Breast epithelium (tissue), 4 donors: ENCODE measurements at regions of chr15 and their contacts with region 1.

Region 1: GRCh38 chr15:31365655-31366127 is 39.1 kb downstream of the KLF13 start:
- DNase-seq: peak; percentile 87 to 92
- H3K4me3 ChIP-seq: peak overlapping the region; percentile 37 to 50 (median 45)
- H3K27ac ChIP-seq: peak overlapping the region; percentile 76 to 84
- H3K4me1 ChIP-seq: peaks cover 0 to 16% of the 10 kb centered on the region in 2 donors
- H3K27me3 ChIP-seq: no peaks in the 10 kb centered on the region
- CTCF ChIP-seq: peak in 1 of 3 donors; percentile 17
- POLR2A ChIP-seq: no peak

Region 2: DNA sequence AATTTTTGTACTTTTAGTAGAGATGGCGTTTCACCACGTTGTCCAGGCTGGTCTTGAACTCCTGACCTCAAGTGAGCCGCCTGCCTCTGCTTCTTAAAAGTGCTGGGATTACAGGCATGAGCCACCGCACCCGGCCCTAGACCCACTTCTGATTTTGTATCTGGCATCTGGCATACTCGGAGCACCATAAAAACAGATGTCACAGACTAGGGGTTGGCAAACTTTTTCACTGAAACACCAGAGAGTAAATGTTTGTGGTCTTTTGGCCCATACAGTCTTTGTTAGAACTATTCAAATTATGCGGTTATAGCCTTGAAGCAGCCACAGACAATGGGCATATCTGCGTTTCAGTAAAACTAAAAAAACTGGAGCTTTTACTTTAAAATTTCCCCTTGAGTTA is 1654.2 kb before region 1 on chr15:
- intact Hi-C with region 1: no loop called
- DNase-seq: no peak
- H3K4me3 ChIP-seq: no peak overlapping the region
- H3K27ac ChIP-seq: no peak overlapping the region
- H3K4me1 ChIP-seq: no peaks in the 10 kb centered on the region
- H3K27me3 ChIP-seq: no peaks in the 10 kb centered on the region
- CTCF ChIP-seq: no peak
- POLR2A ChIP-seq: no peak

Region 3: GRCh38 chr15:31391687-31392671 is 26.3 kb after region 1 on chr15:
- intact Hi-C with region 1: loop called (anchors 2 kb)
- DNase-seq: peak in 1 of 2 donors; percentile 72
- H3K4me3 ChIP-seq: peak overlapping the region; percentile 57 to 79 (median 69)
- H3K27ac ChIP-seq: peak overlapping the region; percentile 91 to 97
- H3K4me1 ChIP-seq: no peaks in the 10 kb centered on the region
- H3K27me3 ChIP-seq: no peaks in the 10 kb centered on the region
- CTCF ChIP-seq: peak in 2 of 3 donors; percentile 9 to 11
- POLR2A ChIP-seq: peak; percentile 87

Region 4: GRCh38 chr15:31550211-31550977 is 184.7 kb after region 1 on chr15:
- intact Hi-C with region 1: no loop called
- DNase-seq: no peak
- H3K4me3 ChIP-seq: no peak overlapping the region
- H3K27ac ChIP-seq: no peak overlapping the region
- H3K4me1 ChIP-seq: no peaks in the 10 kb centered on the region
- H3K27me3 ChIP-seq: no peaks in the 10 kb centered on the region
- CTCF ChIP-seq: no peak
- POLR2A ChIP-seq: no peak